ENCODE measurements at regions of chr18 and their contacts with region 1.

Region 1: GRCh38 chr18:13103366-13103765 is 112.2 kb downstream of the CEP192 start:
- DNase-seq: no peak
- ATAC-seq: no peak

Region 2: DNA sequence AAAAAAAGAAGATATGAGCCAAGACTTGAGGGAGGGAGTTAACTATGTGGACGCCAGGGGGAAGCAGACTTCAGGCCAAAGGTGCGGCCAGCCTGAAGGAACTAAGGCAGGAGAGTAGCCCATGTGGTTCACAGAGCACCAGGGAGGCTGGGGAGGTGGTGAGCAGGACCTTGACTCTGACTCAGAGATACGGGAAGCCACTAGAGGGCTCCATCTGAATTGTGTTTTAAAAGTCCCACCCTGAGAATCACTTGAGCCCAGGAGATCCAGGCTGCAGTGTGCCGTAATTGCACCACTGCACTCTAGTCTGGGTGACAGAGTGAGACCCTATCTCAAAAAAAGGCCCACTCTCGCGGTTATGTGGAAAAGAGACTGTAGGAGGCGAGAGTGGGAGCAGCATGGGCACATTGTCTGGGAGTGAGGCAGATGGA is 99.9 kb before region 1 on chr18:
- intact Hi-C with region 1: loop called (anchors 10 kb)
- DNase-seq: no peak
- ATAC-seq: peak; percentile 87

Region 3: DNA sequence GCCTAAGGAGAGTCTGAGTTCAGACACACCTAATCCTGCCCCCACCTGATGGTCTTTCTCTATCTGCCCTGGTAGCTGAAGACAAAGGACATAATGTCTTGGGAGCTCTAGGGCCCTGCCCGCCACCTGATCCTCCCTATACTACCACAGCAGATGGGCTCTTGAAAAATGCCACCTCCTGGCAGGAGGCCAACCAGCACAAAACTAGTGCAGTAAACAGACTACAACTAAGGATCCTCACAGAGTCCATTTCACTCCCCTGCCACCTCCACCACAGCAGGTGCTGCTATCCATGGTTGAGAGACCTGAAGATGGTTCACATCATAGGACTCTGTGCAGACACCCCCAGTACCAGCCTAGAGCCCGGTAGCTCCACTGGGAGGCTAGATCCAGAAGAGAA is 62.7 kb after region 1 on chr18:
- intact Hi-C with region 1: loop called (anchors 10 kb)
- DNase-seq: no peak
- ATAC-seq: no peak